ENCODE measurements at regions of chr11 and their contacts with region 1.

Region 1: GRCh38 chr11:119474682-119475596 is 52.0 kb upstream of the THY1 start:
- DNase-seq: peak; percentile 71
- CTCF ChIP-seq: peak; percentile 89

Region 2: DNA sequence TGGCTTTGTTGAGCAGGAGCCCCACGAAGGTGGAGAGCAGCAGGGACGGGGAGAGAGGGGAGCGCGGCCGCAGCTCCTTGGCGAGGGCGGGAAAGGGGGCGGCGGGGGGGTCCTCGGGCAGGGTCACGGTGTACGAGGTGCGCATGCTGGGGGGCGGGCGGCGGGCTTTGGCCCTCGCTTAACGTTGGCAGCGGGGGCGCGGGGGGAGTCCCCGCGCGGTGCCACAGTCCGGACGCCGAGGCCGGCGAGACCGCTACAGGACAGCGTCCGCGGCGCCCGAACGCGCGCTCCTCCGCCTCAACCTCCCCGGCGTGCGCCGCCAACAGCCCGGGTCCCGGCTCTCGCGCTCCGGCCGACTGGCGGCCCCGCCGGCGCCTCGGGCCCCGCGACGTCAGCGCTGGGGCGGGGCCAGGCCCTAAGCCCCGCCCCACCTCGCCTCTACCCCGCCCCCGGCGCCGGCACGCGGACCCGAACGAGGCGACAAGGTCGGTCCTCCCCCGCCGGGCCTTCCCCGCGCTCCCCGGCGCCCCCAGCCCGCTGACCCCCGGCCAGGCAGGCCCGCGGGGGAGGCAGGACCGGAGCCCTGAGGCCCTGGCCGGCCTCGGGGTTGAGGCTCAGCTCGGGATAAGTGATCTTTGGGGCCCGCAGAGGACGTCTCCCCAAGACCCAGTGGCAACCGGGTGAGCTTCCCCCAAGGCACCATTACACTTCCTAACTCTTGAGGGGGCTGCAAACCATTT is 110.9 kb before region 1 on chr11:
- CTCF ChIA-PET with region 1: interaction called, 14 read pairs
- POLR2A ChIA-PET with region 1: interaction called, 3 read pairs
- DNase-seq: peak; percentile 82
- CTCF ChIP-seq: no peak

Region 3: DNA sequence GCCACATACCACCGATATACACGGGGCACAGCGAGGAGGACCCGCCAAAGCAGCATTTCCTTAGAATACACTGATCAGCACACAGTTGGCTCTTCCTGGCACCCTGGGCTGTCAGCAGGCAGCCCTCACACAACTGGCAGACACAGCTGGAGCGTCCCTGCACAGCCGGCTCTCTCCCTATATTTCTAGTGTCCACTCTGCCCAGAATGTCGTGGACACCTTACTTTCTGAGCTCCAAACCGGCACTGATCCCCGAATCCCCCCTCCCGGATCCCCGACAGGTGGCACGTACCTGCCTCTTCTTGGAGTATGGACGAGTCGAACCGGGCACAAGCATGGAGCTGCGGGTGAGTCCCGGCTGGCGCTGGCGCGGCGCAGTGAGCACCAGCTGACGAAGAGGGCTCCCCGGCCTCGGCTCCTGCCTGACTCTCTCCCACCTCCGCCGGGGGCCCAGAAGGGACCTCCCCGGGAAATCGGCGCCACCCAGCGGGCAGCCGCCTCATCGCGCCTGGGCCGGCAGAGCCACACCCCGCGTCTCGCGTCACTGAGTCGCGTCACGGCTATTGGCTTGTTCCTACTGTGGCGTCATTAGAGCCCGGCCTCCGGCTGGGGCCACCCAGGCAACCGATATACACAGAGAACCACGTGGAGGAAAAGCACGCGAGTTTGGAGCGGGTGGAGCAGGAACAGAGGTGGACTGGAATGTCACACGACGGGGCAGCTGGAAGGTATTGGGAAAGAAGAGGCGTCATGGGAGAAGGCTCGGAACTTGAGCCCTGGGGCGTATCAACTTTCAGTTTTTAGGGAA is 93.6 kb before region 1 on chr11 and contains the start of gene USP2:
- CTCF ChIA-PET with region 1: interaction called, 12 read pairs
- POLR2A ChIA-PET with region 1: no interaction called
- DNase-seq: peak; percentile 95
- CTCF ChIP-seq: peak; percentile 89

Region 4: DNA sequence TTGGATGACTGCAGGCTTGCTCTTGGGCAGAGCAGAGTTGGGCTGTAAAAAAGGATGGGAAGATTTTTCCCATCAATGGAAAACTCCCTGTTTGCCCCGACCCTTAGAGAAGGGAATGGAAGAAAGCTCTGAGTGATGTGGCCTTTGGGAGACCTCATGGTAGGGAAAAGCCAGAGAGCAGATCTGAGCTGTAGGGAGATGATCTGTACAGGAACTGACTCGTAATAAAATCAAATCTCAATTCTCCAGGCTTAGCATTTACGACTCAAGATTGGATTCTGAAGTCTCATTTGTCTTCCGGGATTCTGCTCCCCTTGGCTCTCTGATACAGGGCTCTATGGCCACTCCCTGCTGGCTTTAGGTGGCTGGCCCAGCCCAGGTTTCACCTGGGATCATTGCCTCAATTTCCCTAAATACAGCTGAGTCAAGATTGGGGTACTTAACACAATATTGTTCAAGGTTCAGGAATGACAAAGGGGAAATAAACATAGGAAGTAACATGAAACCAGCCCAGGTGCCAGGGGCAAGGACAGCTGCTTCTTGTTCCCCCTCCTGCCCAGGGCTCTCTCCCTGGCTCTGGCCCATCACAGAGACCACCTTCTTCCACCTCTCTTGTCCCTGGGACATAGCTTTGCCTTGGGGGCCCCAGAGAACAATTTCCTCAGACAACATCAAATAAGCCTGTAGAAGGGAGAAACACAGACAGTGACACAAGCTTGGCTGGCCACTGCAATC is 13.5 kb before region 1 on chr11:
- CTCF ChIA-PET with region 1: interaction called, 14 read pairs
- POLR2A ChIA-PET with region 1: no interaction called
- DNase-seq: no peak
- CTCF ChIP-seq: no peak